ENCODE measurements at regions of chr19 and their contacts with region 1.

Region 1: GRCh38 chr19:16371540-16371986 is 46.9 kb downstream of the KLF2 start:
- DNase-seq: peak; percentile 96
- ATAC-seq: peak; percentile 63
- H3K4me3 Mint-ChIP-seq: peak overlapping the region; percentile 57
- H3K27ac Mint-ChIP-seq: no peak overlapping the region
- H3K4me1 Mint-ChIP-seq: peaks cover 38% of the 10 kb centered on the region
- H3K27me3 Mint-ChIP-seq: peaks cover 10% of the 10 kb centered on the region

Region 2: DNA sequence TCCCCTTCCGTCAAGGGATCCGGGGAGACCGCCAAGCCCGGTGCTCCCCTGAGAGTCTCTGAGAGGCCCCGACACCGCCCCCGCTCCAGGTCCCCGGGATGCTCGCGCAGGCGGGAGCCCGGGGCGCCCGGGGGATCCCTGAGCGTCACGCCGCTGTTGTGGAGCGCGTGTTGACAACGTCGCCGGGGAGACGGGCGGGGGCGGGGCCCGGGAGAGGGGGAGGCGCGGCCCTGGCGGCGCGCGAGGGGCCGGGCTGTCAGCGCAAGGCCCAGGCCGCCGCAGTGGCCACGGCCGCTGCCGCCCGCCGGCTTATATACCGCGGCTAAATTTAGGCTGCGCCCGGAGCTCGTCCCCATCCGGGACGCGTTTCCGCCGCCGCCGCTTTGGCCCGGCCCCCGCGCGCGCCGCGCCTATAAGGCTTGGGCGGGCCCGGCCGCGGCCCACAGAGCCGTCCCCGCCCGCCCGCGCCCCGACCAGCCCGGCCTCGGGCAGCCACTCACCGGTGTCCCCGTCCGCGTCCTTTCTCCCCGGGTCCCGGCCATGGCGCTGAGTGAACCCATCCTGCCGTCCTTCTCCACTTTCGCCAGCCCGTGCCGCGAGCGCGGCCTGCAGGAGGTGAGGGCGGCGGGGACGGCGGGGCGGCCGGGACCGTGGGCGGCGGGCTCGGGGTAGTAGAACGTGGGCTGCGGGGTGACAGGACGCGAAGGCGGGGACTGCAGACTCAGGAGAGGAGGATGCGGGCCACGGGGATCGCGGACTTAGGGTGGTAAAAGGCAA is 47.0 kb before region 1 on chr19 and contains the start of gene KLF2:
- CTCF ChIA-PET with region 1: interaction called, 449 read pairs
- DNase-seq: peak; percentile 93
- ATAC-seq: peak; percentile 69
- H3K4me3 Mint-ChIP-seq: peak within 1 kb of the TSS; percentile 98
- H3K27ac Mint-ChIP-seq: peak within 1 kb of the TSS; percentile 57
- H3K4me1 Mint-ChIP-seq: peaks cover 52% of the 10 kb centered on the region
- H3K27me3 Mint-ChIP-seq: peaks cover 51% of the 10 kb centered on the region
- total RNA-seq, gene KLF2: 62.1 to 124 TPM

Region 3: GRCh38 chr19:16400911-16401591 is 29.5 kb after region 1 on chr19:
- CTCF ChIA-PET with region 1: no interaction called
- DNase-seq: no peak
- ATAC-seq: no peak
- H3K4me3 Mint-ChIP-seq: no peak overlapping the region
- H3K27ac Mint-ChIP-seq: no peak overlapping the region
- H3K4me1 Mint-ChIP-seq: no peaks in the 10 kb centered on the region
- H3K27me3 Mint-ChIP-seq: no peaks in the 10 kb centered on the region